Calu3 (cell line): ENCODE measurements at regions of chr20 and their contacts with region 1.

Region 1: GRCh38 chr20:4613718-4614620 is 107.7 kb upstream of the PRND start:
- DNase-seq: peak; percentile 38
- H3K4me3 Mint-ChIP-seq: no peak overlapping the region
- H3K27ac Mint-ChIP-seq: no peak overlapping the region
- H3K4me1 Mint-ChIP-seq: no peaks in the 10 kb centered on the region
- H3K27me3 Mint-ChIP-seq: peaks cover 79% of the 10 kb centered on the region
- CTCF ChIP-seq: no peak

Region 2: DNA sequence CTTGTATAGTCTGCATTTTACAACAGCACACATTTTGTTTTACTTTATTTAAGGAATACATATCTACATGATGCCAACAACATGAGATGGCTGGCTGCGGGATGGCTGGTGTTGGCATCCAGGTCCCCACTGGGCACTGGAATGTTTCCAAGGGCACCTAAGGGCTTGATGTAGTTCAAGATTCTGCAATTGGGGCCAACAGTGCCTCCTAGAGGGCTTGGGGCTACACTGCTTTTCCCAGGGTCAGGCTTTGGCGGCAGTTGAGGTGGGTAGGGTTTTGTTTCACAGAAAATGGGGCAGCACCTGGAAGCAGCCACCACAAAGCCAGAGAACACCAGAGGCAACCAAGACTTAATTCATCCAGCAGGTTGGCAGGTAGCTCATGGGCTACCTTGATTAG is 94.4 kb before region 1 on chr20:
- CTCF ChIA-PET with region 1: no interaction called
- intact Hi-C with region 1: no loop called
- DNase-seq: peak; percentile 17
- H3K4me3 Mint-ChIP-seq: no peak overlapping the region
- H3K27ac Mint-ChIP-seq: no peak overlapping the region
- H3K4me1 Mint-ChIP-seq: no peaks in the 10 kb centered on the region
- H3K27me3 Mint-ChIP-seq: peaks cover 49% of the 10 kb centered on the region
- CTCF ChIP-seq: peak; percentile 26

Region 3: GRCh38 chr20:4573564-4574355 is 40.2 kb before region 1 on chr20:
- CTCF ChIA-PET with region 1: no interaction called
- intact Hi-C with region 1: no loop called
- DNase-seq: no peak
- H3K4me3 Mint-ChIP-seq: no peak overlapping the region
- H3K27ac Mint-ChIP-seq: no peak overlapping the region
- H3K4me1 Mint-ChIP-seq: no peaks in the 10 kb centered on the region
- H3K27me3 Mint-ChIP-seq: peaks cover 96% of the 10 kb centered on the region
- CTCF ChIP-seq: no peak

Region 4: DNA sequence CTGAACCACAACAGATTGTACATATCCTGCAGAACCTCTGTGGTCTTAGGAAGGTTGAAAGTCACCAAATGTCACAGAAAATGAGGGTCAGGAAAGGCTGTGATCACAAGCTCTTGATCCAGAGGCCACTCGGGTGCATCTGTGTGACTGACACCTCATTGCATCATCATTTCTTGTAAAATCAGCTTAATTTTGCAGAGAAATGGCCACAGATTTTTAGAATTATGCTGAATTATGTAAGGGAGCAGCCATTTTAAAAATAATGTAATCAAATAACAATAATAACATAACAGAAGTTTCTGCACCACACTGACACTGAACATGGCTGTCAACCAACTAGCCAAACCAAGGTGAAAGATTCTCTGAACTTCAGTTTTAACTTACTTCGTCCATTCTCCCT is 75.3 kb after region 1 on chr20:
- CTCF ChIA-PET with region 1: no interaction called
- intact Hi-C with region 1: no loop called
- DNase-seq: no peak
- H3K4me3 Mint-ChIP-seq: no peak overlapping the region
- H3K27ac Mint-ChIP-seq: no peak overlapping the region
- H3K4me1 Mint-ChIP-seq: peaks cover 11% of the 10 kb centered on the region
- H3K27me3 Mint-ChIP-seq: no peaks in the 10 kb centered on the region
- CTCF ChIP-seq: no peak

Region 5: GRCh38 chr20:4720041-4720976 is 106.3 kb after region 1 on chr20:
- CTCF ChIA-PET with region 1: interaction called, 4 read pairs
- intact Hi-C with region 1: loop called (anchors 2 kb)
- DNase-seq: peak; percentile 24
- H3K4me3 Mint-ChIP-seq: no peak overlapping the region
- H3K27ac Mint-ChIP-seq: no peak overlapping the region
- H3K4me1 Mint-ChIP-seq: no peaks in the 10 kb centered on the region
- H3K27me3 Mint-ChIP-seq: peaks cover 66% of the 10 kb centered on the region
- CTCF ChIP-seq: peak; percentile 33